GM12878 (cell line): ENCODE measurements at regions of chr19 and their contacts with region 1.

Region 1: GRCh38 chr19:13195678-13196077 is 45.5 kb downstream of the IER2 start:
- DNase-seq: no peak
- ATAC-seq: peak; percentile 88
- H3K4me3 ChIP-seq: no peak overlapping the region
- H3K27ac ChIP-seq: no peak overlapping the region
- H3K4me1 ChIP-seq: peaks cover 6% of the 10 kb centered on the region; the same call in 1 of the 2 replicates
- H3K27me3 ChIP-seq: no peaks in the 10 kb centered on the region
- CTCF ChIP-seq: peak; percentile 62 to 75 (median 75); a peak in 5 of 6 replicates
- EP300 ChIP-seq: no peak
- POLR2A ChIP-seq: no peak
- RAD21 ChIP-seq: peak; percentile 81

Region 2: DNA sequence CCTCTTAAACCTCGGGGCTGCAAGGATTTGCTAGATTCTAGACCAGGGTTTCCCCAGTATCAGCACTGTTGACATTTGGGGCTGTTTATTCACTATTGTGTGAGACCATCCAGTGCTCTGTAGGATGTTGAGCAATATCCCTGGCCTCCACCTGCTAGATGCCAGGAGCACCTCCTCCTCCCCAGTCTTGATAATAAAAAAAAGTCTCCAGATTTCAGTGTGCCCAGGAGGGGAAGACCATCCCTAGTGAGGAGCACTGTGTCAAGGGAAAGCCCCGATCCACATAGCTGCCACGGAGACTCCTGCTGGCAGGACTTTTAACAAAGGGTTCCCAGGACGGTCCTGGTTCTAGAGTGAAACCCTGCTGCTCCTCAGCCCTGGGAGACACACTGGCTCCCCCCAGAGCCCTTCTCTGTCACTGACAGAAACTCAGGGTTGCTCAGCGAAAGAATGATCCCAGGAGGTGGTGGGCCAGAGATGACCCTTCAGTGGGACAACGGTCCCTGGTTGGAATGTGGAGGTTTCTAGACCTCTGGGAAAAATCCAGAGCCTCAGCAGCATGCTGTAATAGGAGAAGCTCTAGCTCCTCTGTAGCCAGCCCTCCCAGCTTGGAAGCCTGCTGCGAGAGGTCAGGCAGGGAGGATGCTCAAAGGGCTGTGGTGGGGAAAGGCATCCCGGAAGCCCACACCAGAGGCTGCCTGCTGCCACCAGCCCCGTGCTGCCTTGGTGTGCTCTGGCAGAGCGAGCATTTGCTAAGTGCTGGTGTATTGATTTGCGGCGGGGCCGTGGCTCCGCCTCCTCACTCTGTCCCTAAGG is 113.3 kb before region 1 on chr19:
- CTCF ChIA-PET with region 1: no interaction called
- POLR2A ChIA-PET with region 1: no interaction called
- RAD21 ChIA-PET with region 1: no interaction called
- SMC1A ChIA-PET with region 1: no interaction called
- in situ Hi-C with region 1: no loop called
- intact Hi-C with region 1: no loop called
- DNase-seq: no peak
- ATAC-seq: 0 out of 3 replicates have a peak, but pooled peaks have one; percentile 41
- H3K4me3 ChIP-seq: no peak overlapping the region
- H3K27ac ChIP-seq: no peak overlapping the region
- H3K4me1 ChIP-seq: no peaks in the 10 kb centered on the region
- H3K27me3 ChIP-seq: peaks cover 0 to 3% of the 10 kb centered on the region in 2 experiments; a peak in 2 of 4 replicates
- CTCF ChIP-seq: 0 out of 6 replicates have a peak, but pooled peaks of 1 of the 3 experiments have one; percentile 1
- EP300 ChIP-seq: no peak
- POLR2A ChIP-seq: no peak
- RAD21 ChIP-seq: no peak

Region 3: DNA sequence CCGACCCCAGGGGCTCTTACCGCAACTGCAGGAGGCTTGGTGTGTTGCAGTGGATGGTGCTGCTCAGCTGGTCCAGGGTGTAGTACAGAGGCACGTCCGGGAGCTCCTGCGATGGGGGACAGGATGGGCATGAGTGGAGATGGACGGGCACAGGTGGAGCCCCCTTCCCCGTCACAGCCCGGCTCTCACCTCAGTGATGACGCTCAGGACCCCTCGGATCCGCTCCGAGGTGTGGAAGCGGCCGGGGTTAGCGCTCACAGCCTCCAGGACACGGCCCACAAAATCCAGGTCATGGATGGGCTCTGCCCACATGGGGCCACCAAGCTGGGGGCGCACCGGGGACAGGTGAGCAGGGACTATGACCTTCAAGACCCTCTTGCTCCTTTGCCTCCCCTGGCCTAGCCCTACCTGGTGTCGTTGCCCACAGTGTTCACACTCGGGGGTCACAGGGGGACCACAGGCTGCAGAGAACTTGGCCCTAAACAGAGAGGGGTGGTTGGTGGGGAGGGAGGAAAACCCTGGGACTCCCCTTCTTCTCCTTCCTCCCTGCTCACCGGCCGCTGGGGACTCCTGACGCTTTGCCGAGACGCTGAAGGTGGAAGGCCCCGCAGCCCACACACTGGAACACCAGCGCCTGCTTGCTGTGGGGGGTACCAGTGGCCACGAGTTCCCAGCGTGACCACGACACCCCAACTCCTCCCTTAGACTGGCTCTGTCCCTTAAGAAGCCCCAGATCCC is 86.1 kb before region 1 on chr19:
- CTCF ChIA-PET with region 1: no interaction called
- POLR2A ChIA-PET with region 1: no interaction called
- RAD21 ChIA-PET with region 1: no interaction called
- SMC1A ChIA-PET with region 1: no interaction called
- in situ Hi-C with region 1: no loop called
- intact Hi-C with region 1: no loop called
- DNase-seq: no peak
- ATAC-seq: no peak
- H3K4me3 ChIP-seq: no peak overlapping the region
- H3K27ac ChIP-seq: no peak overlapping the region
- H3K4me1 ChIP-seq: peaks cover 9% of the 10 kb centered on the region
- H3K27me3 ChIP-seq: no peaks in the 10 kb centered on the region
- CTCF ChIP-seq: no peak
- EP300 ChIP-seq: no peak
- POLR2A ChIP-seq: 0 out of 2 replicates have a peak, but pooled peaks have one; percentile 15
- RAD21 ChIP-seq: no peak

Region 4: GRCh38 chr19:13181747-13182388 is 13.8 kb before region 1 on chr19:
- CTCF ChIA-PET with region 1: interaction called, 21 read pairs
- POLR2A ChIA-PET with region 1: interaction called, 7 read pairs
- RAD21 ChIA-PET with region 1: interaction called, 3 read pairs
- SMC1A ChIA-PET with region 1: interaction called, 10 read pairs
- in situ Hi-C with region 1: no loop called
- intact Hi-C with region 1: no loop called
- DNase-seq: no peak
- ATAC-seq: peak; percentile 87
- H3K4me3 ChIP-seq: no peak overlapping the region
- H3K27ac ChIP-seq: peak overlapping the region; percentile 52
- H3K4me1 ChIP-seq: peaks cover 17% of the 10 kb centered on the region
- H3K27me3 ChIP-seq: no peaks in the 10 kb centered on the region
- CTCF ChIP-seq: no peak
- EP300 ChIP-seq: no peak; a peak in 1 of 4 replicates
- POLR2A ChIP-seq: no peak
- RAD21 ChIP-seq: no peak

Region 5: GRCh38 chr19:13255041-13255718 is 59.5 kb after region 1 on chr19:
- CTCF ChIA-PET with region 1: interaction called, 118 read pairs
- POLR2A ChIA-PET with region 1: no interaction called
- RAD21 ChIA-PET with region 1: no interaction called
- SMC1A ChIA-PET with region 1: interaction called, 16 read pairs
- in situ Hi-C with region 1: no loop called
- intact Hi-C with region 1: no loop called
- DNase-seq: no peak
- ATAC-seq: no peak
- H3K4me3 ChIP-seq: no peak overlapping the region
- H3K27ac ChIP-seq: no peak overlapping the region
- H3K4me1 ChIP-seq: no peaks in the 10 kb centered on the region
- H3K27me3 ChIP-seq: no peaks in the 10 kb centered on the region
- CTCF ChIP-seq: no peak
- EP300 ChIP-seq: no peak
- POLR2A ChIP-seq: no peak
- RAD21 ChIP-seq: no peak

Region 6: GRCh38 chr19:13417054-13417453 is 221.4 kb after region 1 on chr19:
- CTCF ChIA-PET with region 1: no interaction called
- POLR2A ChIA-PET with region 1: no interaction called
- RAD21 ChIA-PET with region 1: no interaction called
- SMC1A ChIA-PET with region 1: no interaction called
- in situ Hi-C with region 1: no loop called
- intact Hi-C with region 1: no loop called
- DNase-seq: peak; percentile 20
- ATAC-seq: peak; percentile 66
- H3K4me3 ChIP-seq: no peak overlapping the region
- H3K27ac ChIP-seq: no peak overlapping the region
- H3K4me1 ChIP-seq: peaks cover 5% of the 10 kb centered on the region; the same call in 1 of the 2 replicates
- H3K27me3 ChIP-seq: no peaks in the 10 kb centered on the region
- CTCF ChIP-seq: no peak
- EP300 ChIP-seq: no peak
- POLR2A ChIP-seq: no peak
- RAD21 ChIP-seq: no peak

Region 7: DNA sequence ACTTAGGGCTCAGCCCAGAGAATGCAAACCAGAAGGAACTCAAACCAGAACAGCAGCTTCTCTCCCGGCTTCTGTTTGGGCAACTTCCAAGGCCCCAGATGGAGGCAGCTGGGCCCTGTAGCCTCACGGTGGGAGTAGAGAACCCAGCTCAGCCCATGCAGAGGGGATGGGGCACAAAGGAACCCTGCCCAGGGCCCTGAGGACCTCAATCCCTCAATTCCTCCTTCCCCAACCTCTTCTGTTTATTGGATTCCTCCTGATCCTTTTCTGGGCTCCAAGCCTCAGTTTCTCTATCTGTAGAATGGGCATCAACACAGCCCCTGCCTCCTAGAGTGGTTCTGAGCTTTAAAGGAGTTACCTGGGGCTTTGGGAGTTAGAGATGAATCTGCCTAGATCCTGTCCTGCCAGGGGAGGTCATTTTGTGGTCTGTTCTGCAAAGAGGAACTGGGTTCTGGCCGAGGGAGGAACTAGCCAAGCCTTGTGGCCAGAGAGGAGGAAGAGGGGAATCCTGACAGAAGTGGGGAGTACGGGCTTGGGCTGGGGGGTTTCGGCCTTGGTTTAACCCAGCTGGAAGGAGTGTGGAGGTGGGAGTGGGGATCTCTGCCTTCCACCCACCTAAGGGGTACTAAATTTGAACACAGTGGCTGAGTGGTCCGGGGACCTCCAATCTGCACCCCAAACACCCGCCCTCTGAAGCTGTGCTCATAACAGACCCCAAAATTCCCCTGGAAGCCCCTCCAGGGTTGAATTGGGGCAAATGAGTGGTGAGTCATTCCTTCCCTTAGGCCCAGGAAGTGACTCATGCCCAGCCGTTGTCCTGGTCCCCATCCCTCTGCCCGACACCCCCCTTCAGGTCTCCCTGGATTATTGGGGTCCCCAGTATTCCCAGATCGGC is 1188.2 kb after region 1 on chr19:
- CTCF ChIA-PET with region 1: no interaction called
- POLR2A ChIA-PET with region 1: no interaction called
- RAD21 ChIA-PET with region 1: no interaction called
- SMC1A ChIA-PET with region 1: no interaction called
- in situ Hi-C with region 1: no loop called
- intact Hi-C with region 1: no loop called
- DNase-seq: no peak
- ATAC-seq: peak; percentile 60
- H3K4me3 ChIP-seq: peak overlapping the region; percentile 86
- H3K27ac ChIP-seq: peak overlapping the region; percentile 98
- H3K4me1 ChIP-seq: peaks cover 20% of the 10 kb centered on the region
- H3K27me3 ChIP-seq: no peaks in the 10 kb centered on the region
- CTCF ChIP-seq: no peak
- EP300 ChIP-seq: peak; percentile 55 to 70
- POLR2A ChIP-seq: peak; percentile 58; the same call in 1 of the 2 replicates
- RAD21 ChIP-seq: no peak